IMR-90 (cell line): ENCODE measurements at regions of chr7 and their contacts with region 1.

Region 1: DNA sequence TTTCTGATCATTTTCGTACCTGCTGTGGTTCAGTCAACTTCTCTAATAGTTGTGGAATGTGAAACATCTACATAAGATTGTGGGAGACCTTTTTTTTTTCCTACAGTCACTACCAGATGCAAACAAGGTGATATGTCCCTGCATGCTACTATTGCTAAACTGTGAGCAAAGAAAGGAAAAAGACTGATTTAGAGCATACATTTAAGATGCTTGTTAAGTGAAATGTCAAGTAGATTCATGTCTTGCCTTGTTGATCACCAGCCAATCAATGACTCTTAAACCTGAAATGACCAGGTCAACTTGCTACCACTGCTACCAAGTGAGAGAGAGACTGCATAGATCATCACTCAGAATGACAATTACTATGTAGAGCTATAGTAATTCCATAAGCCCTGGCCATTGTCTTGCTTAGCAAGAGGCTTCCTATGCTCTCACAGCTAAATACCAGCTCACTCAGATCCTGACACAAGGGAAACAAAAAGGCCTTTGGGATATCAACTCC is 84.3 kb upstream of the SKAP2 start:
- DNase-seq: no peak
- ATAC-seq: no peak
- H3K4me3 ChIP-seq: no peak overlapping the region
- H3K27ac ChIP-seq: no peak overlapping the region
- H3K4me1 ChIP-seq: no peaks in the 10 kb centered on the region
- H3K27me3 ChIP-seq: peaks cover 1% of the 10 kb centered on the region
- CTCF ChIP-seq: no peak
- POLR2A ChIP-seq: no peak
- RAD21 ChIP-seq: no peak

Region 2: GRCh38 chr7:26930845-26931244 is 17.8 kb before region 1 on chr7:
- CTCF ChIA-PET with region 1: interaction called, 3 read pairs
- POLR2A ChIA-PET with region 1: interaction called, 14 read pairs
- dilution Hi-C with region 1: no loop called
- in situ Hi-C with region 1: no loop called
- intact Hi-C with region 1: no loop called
- DNase-seq: no peak
- ATAC-seq: no peak
- H3K4me3 ChIP-seq: no peak overlapping the region
- H3K27ac ChIP-seq: no peak overlapping the region
- H3K4me1 ChIP-seq: no peaks in the 10 kb centered on the region
- H3K27me3 ChIP-seq: peaks cover 2% of the 10 kb centered on the region; the same call in 1 of the 2 replicates
- CTCF ChIP-seq: no peak
- POLR2A ChIP-seq: no peak
- RAD21 ChIP-seq: no peak